MCF 10A (cell line): ENCODE measurements at regions of chr7 and their contacts with region 1.

Region 1: GRCh38 chr7:29189743-29190201 is 4.8 kb upstream of the CHN2 start:
- DNase-seq: peak; percentile 60
- H3K4me3 Mint-ChIP-seq: no peak overlapping the region
- H3K27ac Mint-ChIP-seq: no peak overlapping the region
- H3K4me1 Mint-ChIP-seq: no peaks in the 10 kb centered on the region
- H3K27me3 Mint-ChIP-seq: no peaks in the 10 kb centered on the region
- CTCF ChIP-seq: peak; percentile 87

Region 2: DNA sequence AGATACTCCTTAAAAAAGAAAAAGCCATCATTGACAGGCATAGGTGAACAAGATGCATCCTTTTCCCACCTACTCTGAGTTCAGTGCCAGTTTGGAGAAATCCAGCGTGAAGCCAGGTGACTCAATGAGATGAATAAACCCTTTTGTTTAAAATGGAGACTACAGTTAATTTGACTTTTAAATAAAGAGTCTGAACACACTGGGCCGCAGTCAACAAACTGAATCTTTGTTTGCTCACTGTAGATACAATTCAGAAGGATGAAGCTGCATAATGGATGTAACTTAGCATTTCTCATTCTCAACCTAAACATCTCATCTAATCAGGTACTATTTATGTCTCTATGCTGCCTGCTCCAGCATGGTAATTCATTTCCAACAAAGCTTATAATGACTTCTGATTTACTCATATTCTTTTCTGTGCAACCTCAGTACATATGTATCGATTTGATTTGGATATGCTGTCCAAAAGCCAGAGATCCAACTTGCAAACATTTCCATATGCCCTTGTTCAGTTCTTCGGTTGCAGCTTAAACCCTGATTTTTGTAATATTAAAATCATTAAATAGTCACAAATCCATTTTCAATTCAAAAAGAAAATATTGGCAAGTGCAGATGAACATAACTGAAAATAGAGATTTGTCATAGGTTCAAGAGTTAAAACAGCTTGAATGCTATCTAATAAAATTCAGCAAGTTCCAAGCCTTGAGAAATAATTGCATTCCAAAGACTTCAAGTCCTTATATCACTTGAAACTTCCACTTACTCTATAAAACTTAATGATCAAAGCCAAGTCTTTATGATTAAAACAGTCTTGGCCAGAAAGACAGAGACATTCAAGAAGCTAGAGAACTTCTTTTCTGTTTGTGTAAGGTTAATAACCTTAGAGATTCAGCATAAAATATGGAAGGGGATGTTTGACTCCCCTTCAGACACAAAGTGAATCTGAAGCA is 111.2 kb before region 1 on chr7:
- CTCF ChIA-PET with region 1: no interaction called
- POLR2A ChIA-PET with region 1: no interaction called
- intact Hi-C with region 1: no loop called
- DNase-seq: no peak
- H3K4me3 Mint-ChIP-seq: no peak overlapping the region
- H3K27ac Mint-ChIP-seq: no peak overlapping the region
- H3K4me1 Mint-ChIP-seq: no peaks in the 10 kb centered on the region
- H3K27me3 Mint-ChIP-seq: no peaks in the 10 kb centered on the region
- CTCF ChIP-seq: no peak

Region 3: GRCh38 chr7:29156907-29157452 is 32.8 kb before region 1 on chr7:
- CTCF ChIA-PET with region 1: interaction called, 11 read pairs
- POLR2A ChIA-PET with region 1: no interaction called
- intact Hi-C with region 1: no loop called
- DNase-seq: no peak
- H3K4me3 Mint-ChIP-seq: no peak overlapping the region
- H3K27ac Mint-ChIP-seq: no peak overlapping the region
- H3K4me1 Mint-ChIP-seq: no peaks in the 10 kb centered on the region
- H3K27me3 Mint-ChIP-seq: no peaks in the 10 kb centered on the region
- CTCF ChIP-seq: no peak

Region 4: DNA sequence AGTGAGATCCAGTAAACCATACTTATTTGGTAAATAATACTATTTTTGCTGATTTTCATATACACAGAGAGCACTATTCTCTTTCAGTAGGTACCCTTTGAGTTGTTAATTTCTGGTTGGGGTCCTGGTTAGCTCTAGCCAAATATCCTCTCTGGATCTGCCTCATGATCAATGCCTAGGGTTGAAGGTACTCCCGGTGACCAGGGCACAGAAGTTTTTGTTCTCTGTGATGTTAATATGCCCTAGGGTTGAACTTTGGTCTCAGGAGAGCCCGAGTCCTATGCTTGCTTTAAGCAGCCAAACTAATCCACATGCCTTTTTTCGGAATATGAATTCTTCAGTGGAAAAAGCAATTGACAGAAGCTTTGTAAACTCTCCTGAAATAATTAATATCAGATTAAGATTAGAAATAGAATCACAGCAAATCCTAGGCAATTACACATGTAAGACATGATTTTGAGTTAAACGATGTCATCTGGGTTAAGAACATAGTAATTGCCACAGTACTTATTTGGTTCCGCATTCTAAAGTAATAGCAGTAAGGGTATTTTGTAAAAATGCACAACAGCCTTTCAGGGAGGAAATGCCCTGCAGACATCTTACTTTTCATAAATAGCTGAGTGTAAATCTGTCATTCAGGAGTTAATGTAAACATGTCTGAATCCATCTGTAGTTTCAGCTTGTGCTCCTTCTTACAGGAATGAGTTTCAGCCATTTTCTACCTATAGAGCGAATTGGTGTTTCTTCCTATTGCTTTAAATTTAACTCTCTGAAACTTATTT is 14.9 kb after region 1 on chr7:
- CTCF ChIA-PET with region 1: interaction called, 17 read pairs
- POLR2A ChIA-PET with region 1: no interaction called
- intact Hi-C with region 1: no loop called
- DNase-seq: no peak
- H3K4me3 Mint-ChIP-seq: no peak overlapping the region
- H3K27ac Mint-ChIP-seq: no peak overlapping the region
- H3K4me1 Mint-ChIP-seq: peaks cover 9% of the 10 kb centered on the region
- H3K27me3 Mint-ChIP-seq: no peaks in the 10 kb centered on the region
- CTCF ChIP-seq: no peak

Region 5: DNA sequence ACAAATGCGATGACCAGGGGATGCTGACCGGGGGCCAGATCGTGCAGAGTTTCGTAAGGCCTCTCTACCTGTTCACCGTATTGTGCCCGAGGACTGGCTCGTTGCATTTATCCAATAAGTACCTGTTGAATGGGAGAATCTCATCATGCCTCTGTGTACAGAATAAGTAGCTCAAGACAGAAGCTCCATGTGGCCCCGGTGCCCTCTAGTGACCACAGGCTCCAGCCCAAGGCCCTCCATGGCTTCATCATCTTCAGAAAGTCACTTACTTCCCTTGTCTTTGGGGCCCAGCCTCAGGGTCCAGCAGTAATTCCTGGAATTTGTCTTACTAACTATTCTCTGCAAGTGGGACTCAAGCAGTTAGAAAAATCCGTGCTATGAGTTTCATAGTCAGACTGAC is 155.8 kb after region 1 on chr7:
- CTCF ChIA-PET with region 1: interaction called, 25 read pairs
- POLR2A ChIA-PET with region 1: interaction called, 3 read pairs
- intact Hi-C with region 1: loop called (anchors 1 kb)
- DNase-seq: peak; percentile 43
- H3K4me3 Mint-ChIP-seq: no peak overlapping the region
- H3K27ac Mint-ChIP-seq: no peak overlapping the region
- H3K4me1 Mint-ChIP-seq: peaks cover 19% of the 10 kb centered on the region
- H3K27me3 Mint-ChIP-seq: no peaks in the 10 kb centered on the region
- CTCF ChIP-seq: peak; percentile 63

Region 6: DNA sequence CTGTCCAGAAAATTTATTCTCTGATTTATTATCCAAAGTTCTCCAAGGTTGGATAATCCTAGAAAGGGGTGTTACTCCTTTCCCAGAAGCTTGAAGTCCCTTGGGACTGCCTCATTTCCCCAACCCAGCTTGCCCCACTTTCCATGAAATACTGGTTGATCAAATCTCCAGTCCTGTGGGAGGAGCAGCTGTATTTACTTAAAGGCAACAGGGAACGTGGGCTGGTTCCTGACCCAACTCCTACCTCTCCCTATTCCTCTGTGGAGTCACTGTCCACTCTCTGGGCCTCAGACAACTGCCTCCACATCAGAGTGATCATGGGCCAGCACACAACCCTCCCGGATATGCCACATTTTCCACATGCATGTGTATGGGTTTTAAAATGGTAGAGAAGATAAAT is 207.6 kb after region 1 on chr7:
- CTCF ChIA-PET with region 1: interaction called, 13 read pairs
- POLR2A ChIA-PET with region 1: no interaction called
- intact Hi-C with region 1: no loop called
- DNase-seq: no peak
- H3K4me3 Mint-ChIP-seq: no peak overlapping the region
- H3K27ac Mint-ChIP-seq: no peak overlapping the region
- H3K4me1 Mint-ChIP-seq: no peaks in the 10 kb centered on the region
- H3K27me3 Mint-ChIP-seq: no peaks in the 10 kb centered on the region
- CTCF ChIP-seq: no peak